ENCODE measurements at regions of chr9 and their contacts with region 1.

Region 1: GRCh38 chr9:101486693-101487442 is 46.8 kb upstream of the RNF20 start:
- DNase-seq: peak; percentile 63 to 92 (median 80)
- H3K4me3 ChIP-seq: peak overlapping the region; percentile 73 to 96 (median 85)
- H3K27ac ChIP-seq: peak overlapping the region; percentile 74 to 99 (median 95)
- H3K27me3 ChIP-seq: no peaks in the 10 kb centered on the region
- CTCF ChIP-seq: peak in 55 of 56 donors; percentile 16 to 73 (median 56)

Region 2: DNA sequence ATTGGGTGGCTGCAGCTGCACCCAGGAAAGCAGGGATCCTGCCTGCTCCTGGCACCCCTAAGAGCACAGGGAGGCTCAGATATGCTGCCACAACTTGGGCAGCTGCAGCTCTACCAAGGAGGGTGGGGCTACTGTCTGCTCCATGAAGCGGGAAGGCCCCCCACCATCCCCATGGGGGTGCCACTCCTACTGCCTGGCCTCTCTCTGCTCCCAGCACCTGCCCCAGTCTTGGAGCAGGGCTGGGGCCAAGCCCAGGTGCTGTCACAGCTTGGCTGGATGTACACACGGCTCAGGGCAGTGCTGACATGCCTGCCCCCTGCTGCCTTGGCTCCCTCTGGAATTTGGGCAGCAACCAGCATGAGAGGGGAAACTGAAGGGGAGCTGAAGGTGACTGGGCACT is 673.0 kb before region 1 on chr9:
- intact Hi-C with region 1: no loop called
- DNase-seq: no peak
- H3K4me3 ChIP-seq: no peak overlapping the region
- H3K27ac ChIP-seq: no peak overlapping the region
- H3K27me3 ChIP-seq: peaks cover 0 to 4% (median 0%) of the 10 kb centered on the region in 45 donors
- CTCF ChIP-seq: no peak

Region 3: DNA sequence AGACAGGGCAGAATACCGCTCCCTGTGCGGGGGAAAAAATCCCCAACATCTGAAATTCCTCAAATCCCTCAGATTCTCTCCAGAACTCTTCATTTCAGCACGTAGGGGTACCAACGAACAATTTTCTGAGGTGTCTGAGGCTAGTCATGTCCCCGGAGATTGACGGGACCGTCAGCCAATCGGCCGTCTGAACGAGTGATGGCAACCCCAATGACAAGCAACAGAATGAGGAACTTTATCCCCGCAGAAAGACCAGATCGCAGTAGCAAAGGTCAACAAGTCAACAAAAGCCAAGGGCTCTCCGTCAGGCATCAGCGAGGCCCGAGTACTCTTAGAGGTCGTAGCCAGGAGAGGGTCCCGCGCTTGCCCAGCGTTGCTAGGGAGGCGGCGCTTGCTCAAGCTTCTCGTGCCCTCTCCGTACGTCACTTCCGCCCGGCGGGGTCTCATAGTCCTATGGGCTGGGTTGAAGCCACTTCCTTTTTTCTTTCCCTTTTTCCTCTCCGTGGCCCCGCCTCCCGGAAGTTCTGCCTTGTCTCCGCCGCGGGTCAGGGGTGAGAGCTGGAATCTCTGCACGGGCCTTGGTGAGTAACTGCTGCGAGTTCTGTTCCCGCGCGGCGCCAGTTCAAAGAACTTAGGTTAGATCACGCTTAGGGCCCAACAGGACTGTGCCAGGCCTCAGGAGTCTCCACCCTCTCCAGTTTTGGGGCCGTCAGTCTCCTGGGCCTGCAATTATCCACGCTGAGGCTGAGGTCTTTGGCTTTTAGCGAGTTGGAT is 46.7 kb after region 1 on chr9 and contains the start of gene RNF20:
- intact Hi-C with region 1: loop called in 1 of 2 experiments (anchors 2 kb)
- DNase-seq: peak; percentile 99 to 100 (median 100)
- H3K4me3 ChIP-seq: peak within 1 kb of the TSS; percentile 48 to 99 (median 92)
- H3K27ac ChIP-seq: peak within 1 kb of the TSS; percentile 35 to 100 (median 97)
- H3K27me3 ChIP-seq: no peaks in the 10 kb centered on the region
- CTCF ChIP-seq: peak in 22 of 56 donors; percentile 3 to 57 (median 28)
- total RNA-seq, gene RNF20: 43.0 to 74.0 (median 56.6) TPM

Measured in dorsolateral prefrontal cortex (tissue), 120 donors.